ENCODE measurements at regions of chr2 and their contacts with region 1.

Region 1: DNA sequence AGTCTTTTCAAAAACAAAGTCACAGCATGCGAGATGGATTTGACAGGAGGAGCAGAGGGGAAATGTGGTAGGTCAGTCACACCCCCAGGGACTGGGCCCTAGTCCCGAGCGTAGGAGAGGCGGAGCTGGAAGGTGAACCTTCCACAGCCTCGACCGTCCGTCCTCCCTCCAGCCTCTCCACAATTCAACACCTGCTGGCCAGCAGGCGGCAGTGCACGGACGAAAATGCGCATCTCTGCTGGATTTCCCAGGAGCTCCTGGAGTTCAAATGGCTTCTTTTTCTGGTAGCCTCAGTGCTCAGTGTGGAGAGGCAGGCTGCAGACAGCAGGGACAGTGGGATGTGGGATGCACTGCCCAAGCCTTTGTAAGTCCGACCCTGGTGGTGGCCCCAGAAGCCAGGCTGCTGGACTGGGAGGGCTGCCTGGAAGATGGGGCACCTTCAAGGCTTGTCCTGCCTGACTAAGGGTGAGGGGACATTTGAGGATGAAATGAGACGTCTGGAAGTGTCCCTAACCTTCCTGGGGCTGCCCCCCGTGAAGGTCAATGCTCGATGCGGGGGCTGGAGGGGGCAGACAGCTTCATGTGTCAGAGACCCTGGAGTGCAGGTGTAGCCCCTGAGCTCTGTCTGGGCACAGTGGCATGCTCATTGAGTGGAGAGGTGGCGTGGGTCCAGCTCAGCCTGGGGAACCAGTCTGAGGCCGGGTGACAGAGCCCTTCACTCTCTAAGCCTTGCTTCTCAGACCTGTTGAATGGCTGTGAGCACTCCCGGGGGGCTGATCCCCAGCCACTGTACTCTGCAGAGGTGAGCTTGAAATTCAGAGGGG is 189.5 kb downstream of the TFCP2L1 start:
- DNase-seq: peak; percentile 61 to 84 (median 78)
- H3K4me3 ChIP-seq: no peak overlapping the region
- H3K27ac ChIP-seq: no peak overlapping the region
- H3K4me1 ChIP-seq: no peaks in the 10 kb centered on the region
- H3K27me3 ChIP-seq: no peaks in the 10 kb centered on the region
- CTCF ChIP-seq: peak; percentile 49 to 82 (median 68)
- POLR2A ChIP-seq: no peak

Region 2: GRCh38 chr2:121118951-121119555 is 23.6 kb after region 1 on chr2:
- intact Hi-C with region 1: no loop called
- DNase-seq: no peak
- H3K4me3 ChIP-seq: no peak overlapping the region
- H3K27ac ChIP-seq: no peak overlapping the region
- H3K4me1 ChIP-seq: no peaks in the 10 kb centered on the region
- H3K27me3 ChIP-seq: no peaks in the 10 kb centered on the region
- CTCF ChIP-seq: no peak
- POLR2A ChIP-seq: no peak

Region 3: DNA sequence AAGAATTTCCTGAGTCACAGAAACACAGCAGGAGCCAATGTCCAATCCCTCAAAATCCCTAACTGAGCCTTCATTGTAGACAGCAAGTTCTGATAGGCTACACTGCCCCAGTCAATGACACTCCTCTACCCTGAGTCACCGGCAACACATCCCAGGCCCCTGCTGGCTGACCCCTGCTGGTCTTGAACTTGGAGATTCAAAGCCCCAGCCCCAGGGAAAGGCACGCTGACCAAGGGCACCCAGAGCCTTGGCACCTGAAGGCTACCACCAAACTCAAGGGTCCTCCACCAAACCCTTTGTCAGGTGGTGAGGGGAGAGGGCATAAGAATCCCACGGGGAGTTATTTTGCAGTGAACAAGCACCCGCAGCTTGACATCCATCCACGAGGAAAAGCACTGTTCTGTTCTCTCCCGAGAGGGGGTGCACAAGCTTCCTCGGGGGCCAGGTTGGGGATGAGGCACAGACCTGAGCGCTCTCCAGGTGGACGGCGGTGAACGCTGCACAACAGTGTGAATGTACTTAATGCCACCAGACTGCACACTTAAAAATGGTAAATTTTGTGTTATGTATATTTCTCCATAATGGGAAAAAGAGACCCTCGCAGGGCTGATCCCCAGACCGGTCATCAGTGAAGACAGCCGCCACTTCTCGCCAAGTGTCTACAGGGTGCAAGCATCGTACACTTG is 142.7 kb after region 1 on chr2:
- intact Hi-C with region 1: no loop called
- DNase-seq: no peak
- H3K4me3 ChIP-seq: no peak overlapping the region
- H3K27ac ChIP-seq: no peak overlapping the region
- H3K4me1 ChIP-seq: no peaks in the 10 kb centered on the region
- H3K27me3 ChIP-seq: no peaks in the 10 kb centered on the region
- CTCF ChIP-seq: no peak
- POLR2A ChIP-seq: no peak

Region 4: DNA sequence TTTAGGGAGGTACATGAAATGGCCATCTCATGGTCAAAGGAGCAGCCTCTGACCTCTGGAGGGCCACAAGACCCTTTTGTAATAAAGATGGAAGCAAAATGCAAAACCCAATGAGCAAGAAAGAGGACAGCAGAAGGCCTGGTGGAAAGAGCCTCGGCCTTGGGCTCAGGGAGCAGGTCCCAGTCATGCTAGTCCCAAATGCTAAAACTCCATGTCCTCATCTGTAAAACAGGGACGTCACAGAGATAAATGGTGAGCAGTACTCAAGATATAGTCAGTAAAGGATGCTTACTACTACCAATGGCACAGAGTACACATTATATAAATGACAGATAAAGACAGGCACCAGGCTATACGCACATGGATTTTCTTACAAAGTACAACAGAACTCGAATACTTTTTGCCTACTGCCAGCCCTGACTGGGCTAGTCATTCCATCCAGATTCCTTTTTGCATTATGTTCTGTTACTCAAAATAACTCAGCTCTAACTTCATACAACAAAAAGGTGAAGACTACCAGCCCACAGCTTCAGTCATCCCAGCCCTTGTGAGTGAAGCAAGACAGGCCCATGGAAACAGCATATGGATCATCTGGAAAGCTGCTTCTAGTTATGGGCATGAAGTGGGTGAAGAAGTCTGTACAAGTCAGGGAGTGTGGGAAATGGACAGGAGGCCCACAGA is 254.4 kb after region 1 on chr2:
- intact Hi-C with region 1: loop called (anchors 5 kb)
- DNase-seq: no peak
- H3K4me3 ChIP-seq: no peak overlapping the region
- H3K27ac ChIP-seq: no peak overlapping the region
- H3K4me1 ChIP-seq: no peaks in the 10 kb centered on the region
- H3K27me3 ChIP-seq: no peaks in the 10 kb centered on the region
- CTCF ChIP-seq: no peak
- POLR2A ChIP-seq: no peak

Region 5: DNA sequence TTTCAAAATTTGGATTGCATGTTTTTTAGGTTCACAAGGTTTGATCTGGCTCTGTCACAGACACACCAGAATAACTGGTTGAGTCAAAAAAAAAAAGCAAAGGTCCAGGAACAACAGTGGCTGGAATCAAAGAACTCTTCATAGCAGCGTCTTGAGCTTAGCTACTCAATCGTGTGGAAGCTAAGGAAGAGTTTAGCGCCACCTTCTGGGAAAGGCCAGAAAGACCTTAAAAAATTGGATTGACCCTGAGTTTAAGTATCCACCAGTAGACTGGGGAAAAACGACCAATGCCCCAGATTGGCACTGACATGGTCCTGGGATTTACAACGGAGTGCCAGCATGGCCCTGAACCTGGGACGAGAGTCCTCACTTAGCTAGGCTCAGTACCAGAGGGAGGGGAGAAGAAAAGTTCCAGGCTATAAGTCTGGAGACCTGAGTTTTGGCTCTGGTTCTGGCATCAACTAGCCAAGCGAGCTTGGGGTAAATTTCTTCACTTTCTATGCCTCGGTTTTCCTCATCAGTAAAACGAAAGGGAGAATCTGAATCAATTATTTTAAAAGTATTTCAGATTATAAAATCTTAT is 260.7 kb after region 1 on chr2:
- intact Hi-C with region 1: loop called (anchors 5 kb)
- DNase-seq: peak in 6 of 7 donors; percentile 35 to 73 (median 56)
- H3K4me3 ChIP-seq: no peak overlapping the region
- H3K27ac ChIP-seq: no peak overlapping the region
- H3K4me1 ChIP-seq: peaks cover 10 to 33% of the 10 kb centered on the region in 2 donors
- H3K27me3 ChIP-seq: no peaks in the 10 kb centered on the region
- CTCF ChIP-seq: peak; percentile 48 to 64 (median 56)
- POLR2A ChIP-seq: no peak